T-cell (primary cell): ENCODE measurements at regions of chr12 and their contacts with region 1.

Region 1: DNA sequence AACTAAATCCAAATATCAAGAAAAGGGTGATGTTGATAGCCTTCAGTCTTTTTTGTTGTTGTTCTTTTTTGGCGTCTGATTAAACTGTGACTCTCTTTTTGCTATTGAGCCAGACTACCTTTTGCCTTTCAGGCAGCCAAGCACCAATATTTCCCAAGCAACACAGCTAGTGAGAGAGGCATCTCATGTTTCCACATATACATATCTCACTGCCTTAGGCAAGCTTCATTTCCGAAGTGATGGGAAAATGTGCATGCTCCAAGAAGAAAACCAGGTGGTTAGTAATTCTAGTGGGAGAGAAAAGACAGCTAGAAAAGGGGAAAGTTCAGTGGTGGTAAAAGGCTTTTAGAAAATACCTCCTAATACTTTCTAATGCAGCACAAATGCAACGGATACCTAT is 277.7 kb downstream of the TMTC2 start:
- DNase-seq: no peak
- ATAC-seq: no peak
- H3K4me3 ChIP-seq: no peak overlapping the region
- H3K4me3 Mint-ChIP-seq: no peak overlapping the region
- H3K27ac ChIP-seq: no peak overlapping the region
- H3K27ac Mint-ChIP-seq: no peak overlapping the region
- H3K4me1 ChIP-seq: no peaks in the 10 kb centered on the region
- H3K4me1 Mint-ChIP-seq: peaks cover 0 to 3% (median 0%) of the 10 kb centered on the region in 3 donors
- H3K27me3 ChIP-seq: no peaks in the 10 kb centered on the region
- H3K27me3 Mint-ChIP-seq: no peaks in the 10 kb centered on the region

Region 2: GRCh38 chr12:82896979-82897378 is 67.5 kb before region 1 on chr12:
- CTCF ChIA-PET with region 1: no interaction called
- POLR2A ChIA-PET with region 1: interaction called in 1 of 2 experiments, 11 read pairs
- DNase-seq: no peak
- ATAC-seq: no peak
- H3K4me3 ChIP-seq: no peak overlapping the region
- H3K4me3 Mint-ChIP-seq: no peak overlapping the region
- H3K27ac ChIP-seq: no peak overlapping the region
- H3K27ac Mint-ChIP-seq: no peak overlapping the region
- H3K4me1 ChIP-seq: no peaks in the 10 kb centered on the region
- H3K4me1 Mint-ChIP-seq: no peaks in the 10 kb centered on the region
- H3K27me3 ChIP-seq: no peaks in the 10 kb centered on the region
- H3K27me3 Mint-ChIP-seq: no peaks in the 10 kb centered on the region